Esophagus squamous epithelium (tissue), 5 donors: ENCODE measurements at regions of chr1 and their contacts with region 1.

Region 1: GRCh38 chr1:29793101-29793546 is 556.8 kb downstream of the PTPRU start:
- DNase-seq: peak; percentile 11
- H3K4me3 ChIP-seq: no peak overlapping the region
- H3K27ac ChIP-seq: no peak overlapping the region
- H3K4me1 ChIP-seq: no peaks in the 10 kb centered on the region
- H3K27me3 ChIP-seq: peaks cover 0 to 9% (median 0%) of the 10 kb centered on the region in 4 donors
- CTCF ChIP-seq: peak; percentile 27 to 76 (median 64)
- POLR2A ChIP-seq: no peak

Region 2: GRCh38 chr1:29752141-29752540 is 41.0 kb before region 1 on chr1:
- intact Hi-C with region 1: no loop called
- DNase-seq: no peak
- H3K4me3 ChIP-seq: no peak overlapping the region
- H3K27ac ChIP-seq: no peak overlapping the region
- H3K4me1 ChIP-seq: no peaks in the 10 kb centered on the region
- H3K27me3 ChIP-seq: peaks cover 0 to 25% (median 0%) of the 10 kb centered on the region in 4 donors
- CTCF ChIP-seq: no peak
- POLR2A ChIP-seq: no peak

Region 3: GRCh38 chr1:30111431-30111830 is 318.3 kb after region 1 on chr1:
- intact Hi-C with region 1: loop called (anchors 10 kb)
- DNase-seq: no peak
- H3K4me3 ChIP-seq: no peak overlapping the region
- H3K27ac ChIP-seq: no peak overlapping the region
- H3K4me1 ChIP-seq: no peaks in the 10 kb centered on the region
- H3K27me3 ChIP-seq: peaks cover 0 to 70% (median 0%) of the 10 kb centered on the region in 4 donors
- CTCF ChIP-seq: peak in 3 of 6 experiments; percentile 7 to 49 (median 42)
- POLR2A ChIP-seq: no peak